GM12878 (cell line): ENCODE measurements at regions of chrX and their contacts with region 1.

Region 1: DNA sequence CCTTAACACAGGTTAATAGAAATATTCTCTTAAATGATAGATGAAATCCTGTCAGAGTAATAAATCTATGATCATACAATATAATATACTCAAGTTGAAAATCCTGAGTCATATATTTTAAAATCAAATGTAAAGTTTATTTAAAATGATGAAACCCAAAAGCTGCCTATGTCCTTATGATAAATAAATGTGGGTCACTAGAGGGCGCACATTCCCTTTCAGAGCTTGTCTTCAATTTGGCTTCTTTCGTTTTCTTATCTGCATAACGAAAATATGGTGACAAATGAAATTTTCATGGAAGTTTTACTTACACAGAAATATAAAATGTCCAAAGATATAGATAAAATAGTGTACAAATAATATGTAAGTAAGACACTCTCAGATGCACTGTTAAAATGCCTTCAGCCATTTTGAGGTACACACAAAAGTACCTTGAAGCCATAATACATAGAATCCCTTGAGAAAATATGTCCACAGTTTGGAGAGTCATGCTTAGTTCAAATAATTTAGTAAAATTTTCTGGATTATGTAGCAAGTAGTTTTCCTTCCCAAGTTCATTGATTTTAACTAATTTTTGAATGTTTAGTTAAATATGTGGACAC is 680.4 kb downstream of the DMD start:
- DNase-seq: no peak
- ATAC-seq: peak; percentile 63; the same call in 2 of the 3 replicates
- H3K4me3 ChIP-seq: no peak overlapping the region
- H3K27ac ChIP-seq: no peak overlapping the region
- H3K4me1 ChIP-seq: no peaks in the 10 kb centered on the region
- H3K27me3 ChIP-seq: no peaks in the 10 kb centered on the region; a peak in 1 of 4 replicates
- CTCF ChIP-seq: peak; percentile 56 to 69 (median 56)
- EP300 ChIP-seq: no peak
- POLR2A ChIP-seq: no peak
- RAD21 ChIP-seq: peak; percentile 73

Region 2: DNA sequence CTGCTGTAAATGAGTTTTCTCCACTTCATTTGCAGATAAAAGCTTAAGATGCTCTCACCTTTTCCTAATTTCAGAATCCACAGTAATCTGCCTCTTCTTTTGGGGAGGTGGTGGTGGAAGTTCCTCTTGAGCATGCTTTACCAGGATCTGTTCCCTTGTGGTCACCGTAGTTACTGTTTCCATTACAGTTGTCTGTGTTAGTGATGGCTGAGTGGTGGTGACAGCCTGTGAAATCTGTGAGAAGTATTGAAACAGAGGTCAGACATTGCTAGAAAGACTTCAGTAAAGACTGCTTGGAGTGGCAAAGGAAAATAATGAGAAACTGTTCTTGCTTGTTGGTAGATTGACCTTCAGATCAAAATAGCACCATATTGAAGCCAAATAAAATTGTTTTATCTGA is 14.2 kb after region 1 on chrX:
- CTCF ChIA-PET with region 1: interaction called, 13 read pairs
- POLR2A ChIA-PET with region 1: no interaction called
- RAD21 ChIA-PET with region 1: interaction called, 3 read pairs
- SMC1A ChIA-PET with region 1: no interaction called
- in situ Hi-C with region 1: no loop called
- intact Hi-C with region 1: no loop called
- DNase-seq: no peak
- ATAC-seq: no peak
- H3K4me3 ChIP-seq: no peak overlapping the region
- H3K27ac ChIP-seq: no peak overlapping the region
- H3K4me1 ChIP-seq: no peaks in the 10 kb centered on the region
- H3K27me3 ChIP-seq: no peaks in the 10 kb centered on the region
- CTCF ChIP-seq: no peak
- EP300 ChIP-seq: no peak
- POLR2A ChIP-seq: no peak
- RAD21 ChIP-seq: no peak

Region 3: DNA sequence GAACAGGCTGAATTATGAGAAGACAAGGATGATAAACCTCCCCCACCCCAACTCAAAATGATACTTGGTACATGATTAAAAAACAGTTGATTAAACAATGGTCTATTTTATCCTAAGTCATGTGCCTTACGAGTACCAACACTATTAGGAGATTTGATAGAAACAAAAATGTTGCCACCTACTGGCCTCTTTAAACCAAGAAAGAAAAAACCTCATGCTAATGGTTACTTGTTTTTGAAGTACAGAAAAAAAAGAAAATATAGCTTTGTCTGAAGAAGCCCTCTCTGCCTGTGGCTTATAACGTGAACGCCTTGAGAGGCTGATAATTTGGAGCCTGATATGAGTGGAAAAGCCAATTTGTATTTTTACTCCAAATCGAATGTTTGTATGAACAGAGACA is 142.3 kb after region 1 on chrX:
- CTCF ChIA-PET with region 1: interaction called, 7 read pairs
- POLR2A ChIA-PET with region 1: no interaction called
- RAD21 ChIA-PET with region 1: no interaction called
- SMC1A ChIA-PET with region 1: no interaction called
- in situ Hi-C with region 1: no loop called
- intact Hi-C with region 1: loop called (anchors 1 kb)
- DNase-seq: no peak
- ATAC-seq: peak; percentile 52
- H3K4me3 ChIP-seq: no peak overlapping the region
- H3K27ac ChIP-seq: no peak overlapping the region
- H3K4me1 ChIP-seq: no peaks in the 10 kb centered on the region
- H3K27me3 ChIP-seq: no peaks in the 10 kb centered on the region
- CTCF ChIP-seq: peak in 2 of 3 experiments; percentile 15 to 28; a peak in 2 of 6 replicates
- EP300 ChIP-seq: no peak
- POLR2A ChIP-seq: no peak
- RAD21 ChIP-seq: peak; percentile 36; the same call in 1 of the 2 replicates

Region 4: GRCh38 chrX:33336783-33337182 is 805.9 kb after region 1 on chrX:
- CTCF ChIA-PET with region 1: interaction called, 5 read pairs
- POLR2A ChIA-PET with region 1: no interaction called
- RAD21 ChIA-PET with region 1: interaction called, 3 read pairs
- SMC1A ChIA-PET with region 1: no interaction called
- in situ Hi-C with region 1: no loop called
- intact Hi-C with region 1: loop called (anchors 10 kb)
- DNase-seq: no peak
- ATAC-seq: peak; percentile 77
- H3K4me3 ChIP-seq: no peak overlapping the region
- H3K27ac ChIP-seq: no peak overlapping the region
- H3K4me1 ChIP-seq: no peaks in the 10 kb centered on the region
- H3K27me3 ChIP-seq: no peaks in the 10 kb centered on the region
- CTCF ChIP-seq: peak; percentile 21 to 25 (median 22); a peak in 4 of 6 replicates
- EP300 ChIP-seq: no peak
- POLR2A ChIP-seq: no peak
- RAD21 ChIP-seq: peak; percentile 42; the same call in 1 of the 2 replicates

Region 5: GRCh38 chrX:34300871-34301270 is 1770.0 kb after region 1 on chrX:
- CTCF ChIA-PET with region 1: interaction called, 6 read pairs
- POLR2A ChIA-PET with region 1: no interaction called
- RAD21 ChIA-PET with region 1: no interaction called
- SMC1A ChIA-PET with region 1: no interaction called
- in situ Hi-C with region 1: no loop called
- intact Hi-C with region 1: loop called (anchors 5 kb)
- DNase-seq: no peak
- ATAC-seq: peak; percentile 61; the same call in 2 of the 3 replicates
- H3K4me3 ChIP-seq: no peak overlapping the region
- H3K27ac ChIP-seq: no peak overlapping the region
- H3K4me1 ChIP-seq: no peaks in the 10 kb centered on the region
- H3K27me3 ChIP-seq: no peaks in the 10 kb centered on the region
- CTCF ChIP-seq: peak; percentile 49 to 75 (median 60); a peak in 5 of 6 replicates
- EP300 ChIP-seq: no peak
- POLR2A ChIP-seq: no peak
- RAD21 ChIP-seq: peak; percentile 78